ENCODE measurements at regions of chr17 and their contacts with region 1.

Region 1: GRCh38 chr17:5055543-5055942 is 20.3 kb upstream of the SLC52A1 start:
- DNase-seq: no peak

Region 2: DNA sequence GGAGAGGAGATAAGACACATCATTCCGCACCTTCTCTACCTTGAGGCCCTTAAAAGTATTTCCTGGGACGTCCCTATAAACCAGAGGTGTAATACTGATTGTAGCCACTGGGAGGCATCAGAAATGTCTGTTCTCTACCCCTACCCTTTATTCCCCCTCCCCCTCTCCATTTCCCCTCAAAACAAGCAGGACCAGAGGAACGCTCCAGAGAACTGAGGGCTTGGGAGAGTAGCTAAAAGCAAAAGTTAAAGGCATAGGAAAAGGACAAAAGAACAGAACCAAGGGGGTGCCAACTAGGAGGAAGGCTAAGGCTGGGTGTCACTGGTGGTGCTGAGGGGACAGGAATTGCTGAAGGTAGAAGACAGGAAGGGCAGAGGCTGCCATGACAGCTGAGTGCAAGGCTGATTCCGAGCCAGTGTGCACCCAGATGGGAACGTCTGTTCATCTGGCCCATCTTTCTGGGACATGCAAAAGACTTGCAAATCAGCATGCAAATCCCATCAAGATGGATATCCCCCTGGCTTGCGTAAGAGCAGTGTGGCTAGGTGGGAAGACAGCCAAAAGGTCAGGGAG is 74.8 kb before region 1 on chr17:
- intact Hi-C with region 1: loop called (anchors 5 kb)
- DNase-seq: no peak

Region 3: GRCh38 chr17:5027916-5028315 is 27.6 kb before region 1 on chr17:
- intact Hi-C with region 1: loop called (anchors 5 kb)
- DNase-seq: no peak

Region 4: GRCh38 chr17:5069724-5070123 is 14.2 kb after region 1 on chr17:
- intact Hi-C with region 1: no loop called
- DNase-seq: no peak